A549 (cell line): ENCODE measurements at regions of chr14 and their contacts with region 1.

Region 1: DNA sequence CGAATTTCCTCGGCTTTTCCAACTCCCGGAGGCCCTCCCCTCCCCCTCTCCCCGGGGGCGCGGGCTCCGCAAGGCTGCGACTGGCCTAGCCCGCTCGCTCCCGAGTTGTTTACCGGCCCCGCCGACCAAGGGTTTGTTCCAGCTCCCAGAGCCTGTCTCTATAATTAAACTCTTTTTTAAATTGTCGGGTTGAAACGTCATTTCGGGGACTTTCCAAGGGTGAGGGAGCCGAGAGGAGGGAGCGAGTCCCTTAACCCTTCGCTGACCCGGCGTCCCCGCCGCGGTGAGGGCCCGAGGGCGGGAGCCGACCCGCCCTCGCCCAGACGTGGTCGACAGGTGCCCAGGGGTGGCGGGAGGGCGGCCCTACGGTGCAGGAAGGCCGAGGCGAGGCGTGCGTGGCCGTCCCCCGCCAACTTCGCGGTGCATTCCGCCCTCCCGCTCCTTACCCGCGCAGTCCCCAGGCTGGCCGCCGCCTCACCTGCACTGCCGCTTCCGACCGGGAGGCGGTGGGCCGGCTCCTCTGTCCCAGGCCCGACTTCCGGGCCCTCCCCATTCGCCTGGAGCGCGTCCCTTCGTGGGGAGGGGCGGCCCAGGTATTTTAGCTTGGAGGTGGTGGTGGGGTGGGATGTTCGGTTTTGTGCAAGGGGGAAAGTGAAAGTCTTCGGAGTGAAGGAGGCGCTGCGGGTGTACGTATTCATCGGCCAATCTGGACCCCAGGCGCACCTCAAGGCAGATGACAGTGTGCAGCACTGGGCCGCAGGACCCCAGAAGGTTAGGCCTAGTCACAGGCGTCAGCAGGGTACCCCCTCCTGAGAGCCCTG is 2.9 kb upstream of the ZFP36L1 start:
- DNase-seq: peak in 1 of 2 experiments; percentile 90
- ATAC-seq: peak; percentile 60 to 75
- H3K4me3 ChIP-seq: peak overlapping the region; percentile 95
- H3K27ac ChIP-seq: peak overlapping the region; percentile 99 to 100
- H3K4me1 ChIP-seq: peaks cover 21% of the 10 kb centered on the region
- CTCF ChIP-seq: peak; percentile 38; the same call in 2 of the 3 replicates
- EP300 ChIP-seq: no peak; a peak in 1 of 5 replicates
- POLR2A ChIP-seq: peak; percentile 83
- RAD21 ChIP-seq: no peak; a peak in 4 of 5 replicates

Region 2: GRCh38 chr14:67934008-67934481 is 861.8 kb before region 1 on chr14:
- CTCF ChIA-PET with region 1: interaction called, 17 read pairs
- POLR2A ChIA-PET with region 1: interaction called, 13 read pairs
- DNase-seq: peak; percentile 82 to 89
- ATAC-seq: peak; percentile 99
- H3K4me3 ChIP-seq: no peak overlapping the region
- H3K27ac ChIP-seq: peak overlapping the region; percentile 73 to 78
- H3K4me1 ChIP-seq: peaks cover 13% of the 10 kb centered on the region
- CTCF ChIP-seq: peak; percentile 93
- EP300 ChIP-seq: no peak
- POLR2A ChIP-seq: no peak
- RAD21 ChIP-seq: peak; percentile 89 to 93

Region 3: GRCh38 chr14:68124979-68125731 is 670.7 kb before region 1 on chr14:
- CTCF ChIA-PET with region 1: no interaction called
- POLR2A ChIA-PET with region 1: interaction called, 14 read pairs
- DNase-seq: peak; percentile 51 to 80
- ATAC-seq: peak; percentile 92 to 95
- H3K4me3 ChIP-seq: no peak overlapping the region
- H3K27ac ChIP-seq: peak overlapping the region; percentile 75 to 88
- H3K4me1 ChIP-seq: peaks cover 34% of the 10 kb centered on the region
- CTCF ChIP-seq: no peak
- EP300 ChIP-seq: peak in 1 of 2 experiments; percentile 38; a peak in 1 of 5 replicates
- POLR2A ChIP-seq: no peak
- RAD21 ChIP-seq: no peak; a peak in 1 of 5 replicates

Region 4: GRCh38 chr14:68191567-68192321 is 604.1 kb before region 1 on chr14:
- CTCF ChIA-PET with region 1: no interaction called
- POLR2A ChIA-PET with region 1: interaction called, 53 read pairs
- DNase-seq: peak; percentile 62 to 99
- ATAC-seq: peak; percentile 98
- H3K4me3 ChIP-seq: peak overlapping the region; percentile 6; the same call in 1 of the 3 replicates
- H3K27ac ChIP-seq: peak overlapping the region; percentile 93 to 98
- H3K4me1 ChIP-seq: peaks cover 66% of the 10 kb centered on the region
- CTCF ChIP-seq: no peak; the same call in 2 of the 3 replicates
- EP300 ChIP-seq: peak; percentile 98 to 99
- POLR2A ChIP-seq: no peak
- RAD21 ChIP-seq: peak; percentile 60 to 85

Region 5: GRCh38 chr14:68458840-68459469 is 336.9 kb before region 1 on chr14:
- CTCF ChIA-PET with region 1: interaction called, 3 read pairs
- POLR2A ChIA-PET with region 1: interaction called, 48 read pairs
- DNase-seq: peak; percentile 96 to 100
- ATAC-seq: peak; percentile 98 to 99
- H3K4me3 ChIP-seq: no peak overlapping the region
- H3K27ac ChIP-seq: peak overlapping the region; percentile 95 to 100
- H3K4me1 ChIP-seq: peaks cover 59% of the 10 kb centered on the region
- CTCF ChIP-seq: no peak
- EP300 ChIP-seq: peak; percentile 99
- POLR2A ChIP-seq: no peak
- RAD21 ChIP-seq: peak; percentile 52 to 92

Region 6: DNA sequence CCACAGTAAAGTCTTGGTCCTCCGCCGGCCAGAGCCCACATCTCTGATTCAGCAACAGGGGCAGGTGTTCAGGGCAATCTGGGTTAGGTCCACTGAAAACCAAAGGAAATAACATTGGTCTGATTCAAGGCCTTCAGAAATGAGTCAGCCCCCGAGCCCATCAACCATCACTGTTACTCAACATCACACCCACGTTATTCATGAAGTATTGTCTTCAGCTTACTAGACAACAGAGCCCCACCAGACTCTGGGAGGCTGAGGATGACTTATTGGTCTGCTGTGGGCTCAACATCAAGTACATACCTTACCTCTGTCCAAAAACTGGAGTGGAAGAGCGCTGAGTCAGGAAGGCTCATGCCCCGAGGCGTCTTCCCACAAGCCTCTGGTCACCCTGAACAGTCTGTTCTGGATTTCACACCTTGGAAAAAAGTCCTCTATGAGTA is 100.5 kb before region 1 on chr14:
- CTCF ChIA-PET with region 1: interaction called, 3 read pairs
- POLR2A ChIA-PET with region 1: interaction called, 13 read pairs
- DNase-seq: peak; percentile 92 to 97
- ATAC-seq: peak; percentile 94 to 96
- H3K4me3 ChIP-seq: no peak overlapping the region
- H3K27ac ChIP-seq: peak overlapping the region; percentile 86 to 94
- H3K4me1 ChIP-seq: peaks cover 34% of the 10 kb centered on the region
- CTCF ChIP-seq: no peak
- EP300 ChIP-seq: peak; percentile 84 to 90; a peak in 4 of 5 replicates
- POLR2A ChIP-seq: no peak
- RAD21 ChIP-seq: peak; percentile 40 to 64

Region 7: GRCh38 chr14:68816262-68816942 is 20.6 kb after region 1 on chr14:
- CTCF ChIA-PET with region 1: interaction called, 85 read pairs
- POLR2A ChIA-PET with region 1: interaction called, 187 read pairs
- DNase-seq: peak; percentile 92 to 93
- ATAC-seq: peak; percentile 90 to 92
- H3K4me3 ChIP-seq: peak overlapping the region; percentile 45
- H3K27ac ChIP-seq: peak overlapping the region; percentile 97 to 100
- H3K4me1 ChIP-seq: peaks cover 47% of the 10 kb centered on the region
- CTCF ChIP-seq: peak; percentile 94
- EP300 ChIP-seq: 0 out of 5 replicates have a peak, but pooled peaks of 1 of the 2 experiments have one; percentile 1
- POLR2A ChIP-seq: peak; percentile 48
- RAD21 ChIP-seq: peak; percentile 98 to 99

Region 8: DNA sequence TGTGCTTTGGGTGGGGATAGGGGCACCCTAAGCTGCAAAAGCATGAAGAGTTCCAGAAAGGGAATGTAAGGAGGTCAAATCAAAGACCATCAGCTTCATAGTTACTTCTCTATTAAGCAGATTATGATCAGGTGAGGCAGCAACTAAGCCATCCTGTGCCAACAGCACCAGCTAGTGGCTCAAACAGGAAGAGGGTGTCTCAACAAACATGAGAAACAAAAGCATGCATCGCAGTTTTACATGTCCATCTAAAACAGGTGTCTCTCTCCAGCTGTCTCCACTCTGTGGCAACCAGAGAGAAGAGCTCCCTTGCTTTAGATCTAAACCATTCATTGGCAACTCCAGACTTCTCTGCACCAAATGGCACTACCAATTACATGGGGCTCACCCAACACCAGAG is 130.4 kb after region 1 on chr14:
- CTCF ChIA-PET with region 1: no interaction called
- POLR2A ChIA-PET with region 1: no interaction called
- DNase-seq: peak in 1 of 2 experiments; percentile 46
- ATAC-seq: no peak
- H3K4me3 ChIP-seq: no peak overlapping the region
- H3K27ac ChIP-seq: no peak overlapping the region
- H3K4me1 ChIP-seq: peaks cover 26% of the 10 kb centered on the region
- CTCF ChIP-seq: peak; percentile 23; the same call in 2 of the 3 replicates
- EP300 ChIP-seq: no peak
- POLR2A ChIP-seq: no peak
- RAD21 ChIP-seq: no peak